ENCODE measurements at regions of chr5 and their contacts with region 1.

Region 1: GRCh38 chr5:132064738-132065331 is 4.4 kb downstream of the IL3 start:
- DNase-seq: peak; percentile 59 to 71 (median 67)
- H3K4me3 ChIP-seq: no peak overlapping the region
- H3K4me3 Mint-ChIP-seq: no peak overlapping the region
- H3K27ac ChIP-seq: no peak overlapping the region
- H3K27ac Mint-ChIP-seq: peak overlapping the region in 5 of 7 donors; percentile 7 to 84 (median 47)
- H3K4me1 ChIP-seq: peaks cover 22% of the 10 kb centered on the region
- H3K4me1 Mint-ChIP-seq: peaks cover 14 to 54% (median 33%) of the 10 kb centered on the region in 4 donors
- H3K27me3 ChIP-seq: no peaks in the 10 kb centered on the region
- H3K27me3 Mint-ChIP-seq: no peaks in the 10 kb centered on the region

Region 2: DNA sequence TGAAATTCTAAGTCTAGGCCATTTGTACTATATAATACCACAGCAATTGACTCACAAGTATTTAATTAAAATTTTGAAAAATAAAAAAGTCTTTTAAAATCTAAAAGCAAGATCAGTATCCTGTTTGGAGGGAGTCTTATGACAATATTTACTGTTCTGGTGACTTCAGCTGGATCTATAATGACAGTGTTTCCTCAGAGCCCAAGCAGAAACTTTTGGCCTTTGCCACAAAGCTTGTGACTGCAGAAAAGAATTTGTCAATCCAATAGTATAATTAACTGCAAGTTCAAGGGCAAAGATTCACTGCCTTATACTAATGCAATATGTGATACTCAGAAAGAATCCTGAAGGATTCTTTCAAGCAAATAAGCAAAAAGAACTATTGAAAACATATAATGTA is 380.2 kb before region 1 on chr5:
- CTCF ChIA-PET with region 1: no interaction called
- POLR2A ChIA-PET with region 1: no interaction called
- intact Hi-C with region 1: no loop called
- DNase-seq: no peak
- H3K4me3 ChIP-seq: no peak overlapping the region
- H3K4me3 Mint-ChIP-seq: no peak overlapping the region
- H3K27ac ChIP-seq: no peak overlapping the region
- H3K27ac Mint-ChIP-seq: no peak overlapping the region
- H3K4me1 ChIP-seq: no peaks in the 10 kb centered on the region
- H3K4me1 Mint-ChIP-seq: peaks cover 0 to 5% (median 0%) of the 10 kb centered on the region in 4 donors
- H3K27me3 ChIP-seq: no peaks in the 10 kb centered on the region
- H3K27me3 Mint-ChIP-seq: no peaks in the 10 kb centered on the region

Region 3: DNA sequence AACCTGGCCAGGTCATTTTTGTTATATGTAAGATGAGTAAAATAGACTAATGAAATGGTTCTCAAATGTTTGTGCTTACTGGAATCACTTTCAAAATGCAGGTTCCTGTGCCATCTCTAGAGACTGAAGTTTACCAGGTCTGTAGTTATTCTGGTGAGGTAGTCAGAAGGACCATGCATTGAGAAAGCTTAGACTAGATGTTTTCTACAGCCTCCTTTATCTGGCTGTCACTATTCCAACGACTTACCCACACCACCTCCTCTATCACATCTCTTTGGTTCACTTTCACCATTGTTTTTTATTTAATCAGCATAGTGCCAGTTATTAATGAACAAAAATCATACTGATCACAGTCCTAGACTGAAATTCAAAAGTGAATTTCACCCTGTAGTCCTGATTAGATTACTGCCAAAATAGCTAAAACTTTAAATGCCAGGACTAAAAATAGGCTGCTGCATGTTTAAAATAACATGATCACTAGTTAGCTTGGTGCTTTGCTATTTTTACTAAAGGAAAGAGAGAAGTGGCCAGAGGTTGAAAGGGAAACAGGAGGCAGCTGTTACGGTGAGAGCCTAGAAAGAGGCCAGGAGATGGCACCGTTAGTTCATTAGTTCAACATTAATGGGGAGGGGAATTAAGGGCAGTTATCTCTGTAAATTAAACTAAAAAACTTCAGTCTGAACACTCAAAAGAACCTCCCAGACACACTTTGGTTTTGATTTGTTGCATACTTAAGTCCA is 254.2 kb before region 1 on chr5:
- CTCF ChIA-PET with region 1: interaction called, 4 read pairs
- POLR2A ChIA-PET with region 1: no interaction called
- intact Hi-C with region 1: loop called (anchors 1 kb)
- DNase-seq: peak in 4 of 5 donors; percentile 16 to 27 (median 22)
- H3K4me3 ChIP-seq: no peak overlapping the region
- H3K4me3 Mint-ChIP-seq: no peak overlapping the region
- H3K27ac ChIP-seq: no peak overlapping the region
- H3K27ac Mint-ChIP-seq: peak overlapping the region in 1 of 7 donors; percentile 33
- H3K4me1 ChIP-seq: no peaks in the 10 kb centered on the region
- H3K4me1 Mint-ChIP-seq: peaks cover 0 to 4% (median 0%) of the 10 kb centered on the region in 4 donors
- H3K27me3 ChIP-seq: no peaks in the 10 kb centered on the region
- H3K27me3 Mint-ChIP-seq: no peaks in the 10 kb centered on the region

Region 4: GRCh38 chr5:132007399-132008165 is 57.3 kb before region 1 on chr5:
- CTCF ChIA-PET with region 1: interaction called, 71 read pairs
- POLR2A ChIA-PET with region 1: interaction called, 4 read pairs
- intact Hi-C with region 1: loop called (anchors 2 kb)
- DNase-seq: peak; percentile 62 to 71 (median 66)
- H3K4me3 ChIP-seq: no peak overlapping the region
- H3K4me3 Mint-ChIP-seq: peak overlapping the region in 1 of 8 donors; percentile 53
- H3K27ac ChIP-seq: no peak overlapping the region
- H3K27ac Mint-ChIP-seq: peak overlapping the region in 5 of 7 donors; percentile 6 to 83 (median 32)
- H3K4me1 ChIP-seq: peaks cover 32% of the 10 kb centered on the region
- H3K4me1 Mint-ChIP-seq: peaks cover 21 to 53% (median 37%) of the 10 kb centered on the region in 4 donors
- H3K27me3 ChIP-seq: no peaks in the 10 kb centered on the region
- H3K27me3 Mint-ChIP-seq: peaks cover 0 to 4% of the 10 kb centered on the region in 2 donors

Region 5: DNA sequence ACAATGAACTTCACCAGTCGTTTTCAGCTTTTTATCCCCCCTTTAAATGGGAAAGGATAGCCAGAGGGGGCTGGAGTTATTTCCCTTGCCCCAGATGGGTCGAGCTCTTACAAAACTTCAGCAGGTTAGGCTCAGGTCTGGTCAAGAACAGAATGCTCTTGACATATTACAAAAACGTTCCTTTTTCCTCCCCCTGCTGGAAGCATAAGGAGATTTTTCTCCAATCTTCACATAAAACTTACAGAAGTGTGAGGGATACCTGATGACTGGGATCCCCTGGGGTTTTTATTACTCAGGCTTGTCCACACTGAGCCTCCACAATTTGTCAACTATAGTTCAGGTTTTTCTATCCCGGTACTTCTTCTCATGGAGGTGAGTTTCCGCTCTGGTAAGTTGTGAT is 69.5 kb after region 1 on chr5:
- CTCF ChIA-PET with region 1: interaction called, 73 read pairs
- POLR2A ChIA-PET with region 1: no interaction called
- intact Hi-C with region 1: loop called (anchors 1 kb)
- DNase-seq: peak in 4 of 5 donors; percentile 21 to 31 (median 28)
- H3K4me3 ChIP-seq: no peak overlapping the region
- H3K4me3 Mint-ChIP-seq: no peak overlapping the region
- H3K27ac ChIP-seq: no peak overlapping the region
- H3K27ac Mint-ChIP-seq: peak overlapping the region in 2 of 7 donors; percentile 26 to 70
- H3K4me1 ChIP-seq: no peaks in the 10 kb centered on the region
- H3K4me1 Mint-ChIP-seq: peaks cover 0 to 12% (median 0%) of the 10 kb centered on the region in 4 donors
- H3K27me3 ChIP-seq: no peaks in the 10 kb centered on the region
- H3K27me3 Mint-ChIP-seq: peaks cover 1 to 4% of the 10 kb centered on the region in 2 donors

Region 6: GRCh38 chr5:132190161-132190817 is 125.5 kb after region 1 on chr5:
- CTCF ChIA-PET with region 1: interaction called, 11 read pairs
- POLR2A ChIA-PET with region 1: no interaction called
- intact Hi-C with region 1: no loop called
- DNase-seq: peak; percentile 37 to 54 (median 46)
- H3K4me3 ChIP-seq: no peak overlapping the region
- H3K4me3 Mint-ChIP-seq: no peak overlapping the region
- H3K27ac ChIP-seq: no peak overlapping the region
- H3K27ac Mint-ChIP-seq: peak overlapping the region in 1 of 7 donors; percentile 4
- H3K4me1 ChIP-seq: no peaks in the 10 kb centered on the region
- H3K4me1 Mint-ChIP-seq: peaks cover 0 to 4% (median 1%) of the 10 kb centered on the region in 4 donors
- H3K27me3 ChIP-seq: no peaks in the 10 kb centered on the region
- H3K27me3 Mint-ChIP-seq: peaks cover 3 to 7% of the 10 kb centered on the region in 2 donors

Region 7: GRCh38 chr5:132386644-132387286 is 321.9 kb after region 1 on chr5:
- CTCF ChIA-PET with region 1: no interaction called
- POLR2A ChIA-PET with region 1: no interaction called
- intact Hi-C with region 1: loop called (anchors 10 kb)
- DNase-seq: peak; percentile 75 to 80 (median 78)
- H3K4me3 ChIP-seq: no peak overlapping the region
- H3K4me3 Mint-ChIP-seq: peak overlapping the region in 1 of 8 donors; percentile 36
- H3K27ac ChIP-seq: no peak overlapping the region
- H3K27ac Mint-ChIP-seq: peak overlapping the region; percentile 22 to 88 (median 31)
- H3K4me1 ChIP-seq: peaks cover 20% of the 10 kb centered on the region
- H3K4me1 Mint-ChIP-seq: peaks cover 20 to 53% (median 33%) of the 10 kb centered on the region in 4 donors
- H3K27me3 ChIP-seq: no peaks in the 10 kb centered on the region
- H3K27me3 Mint-ChIP-seq: no peaks in the 10 kb centered on the region

Measured in CD4-positive, alpha-beta memory T cell (primary cell).